ENCODE measurements at regions of chr3 and their contacts with region 1.

Region 1: DNA sequence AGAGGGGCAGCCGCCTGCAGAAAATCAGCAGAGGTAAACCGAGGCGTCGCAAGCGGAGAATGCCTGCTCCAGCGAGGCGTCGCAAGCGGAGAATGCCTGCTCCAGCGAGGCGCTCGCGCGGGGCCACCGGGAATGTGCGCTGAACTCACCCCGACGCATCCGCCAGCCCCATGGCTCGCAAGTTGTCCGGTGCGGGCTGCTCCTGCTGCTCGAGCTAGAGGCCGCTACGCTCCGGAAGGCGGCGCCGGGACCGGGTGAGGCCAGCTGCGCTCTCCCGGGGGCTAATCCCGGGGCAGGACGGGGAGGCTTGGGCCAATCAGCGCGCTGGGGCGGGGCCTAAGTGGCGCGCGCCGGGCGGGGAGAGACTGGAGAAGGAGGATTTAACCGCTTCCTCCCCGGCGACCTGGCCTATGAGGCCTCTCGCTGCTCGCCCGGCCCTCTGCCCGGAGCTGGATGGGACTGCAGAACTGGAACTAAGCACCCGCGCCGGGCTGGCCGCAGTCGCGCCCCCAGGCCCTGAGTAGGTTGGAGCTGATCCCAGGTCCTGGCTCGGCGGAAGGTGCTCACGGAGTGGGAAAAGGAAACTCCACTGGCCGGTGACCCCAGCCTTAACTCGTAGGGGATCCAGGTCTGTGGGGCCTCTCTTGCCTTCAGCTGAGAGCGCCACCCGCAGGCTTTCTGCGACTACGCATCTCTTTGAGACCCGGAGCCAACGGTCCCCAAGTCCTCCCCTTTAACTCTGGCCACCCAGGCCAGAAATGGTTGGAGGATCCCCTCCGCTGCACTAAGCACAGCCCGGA is at the start of gene SLC26A6:
- DNase-seq: peak; percentile 97
- H3K4me3 ChIP-seq: peak within 1 kb of the TSS; percentile 71 to 94 (median 82)
- H3K27ac ChIP-seq: peak within 1 kb of the TSS; percentile 33
- H3K4me1 ChIP-seq: peaks cover 14% of the 10 kb centered on the region
- H3K27me3 ChIP-seq: no peaks in the 10 kb centered on the region
- CTCF ChIP-seq: peak; percentile 40 to 67
- total RNA-seq, gene SLC26A6: 29.5 to 47.7 TPM

Region 2: GRCh38 chr3:48465531-48466378 is 169.7 kb before region 1 on chr3:
- CTCF ChIA-PET with region 1: no interaction called
- dilution Hi-C with region 1: loop called (anchors 5 kb)
- in situ Hi-C with region 1: no loop called
- intact Hi-C with region 1: loop called (anchors 10 kb)
- DNase-seq: peak; percentile 100
- H3K4me3 ChIP-seq: peak overlapping the region; percentile 26 to 55 (median 50)
- H3K27ac ChIP-seq: peak overlapping the region; percentile 99
- H3K4me1 ChIP-seq: peaks cover 33% of the 10 kb centered on the region
- H3K27me3 ChIP-seq: no peaks in the 10 kb centered on the region
- CTCF ChIP-seq: peak; percentile 45 to 81

Region 3: DNA sequence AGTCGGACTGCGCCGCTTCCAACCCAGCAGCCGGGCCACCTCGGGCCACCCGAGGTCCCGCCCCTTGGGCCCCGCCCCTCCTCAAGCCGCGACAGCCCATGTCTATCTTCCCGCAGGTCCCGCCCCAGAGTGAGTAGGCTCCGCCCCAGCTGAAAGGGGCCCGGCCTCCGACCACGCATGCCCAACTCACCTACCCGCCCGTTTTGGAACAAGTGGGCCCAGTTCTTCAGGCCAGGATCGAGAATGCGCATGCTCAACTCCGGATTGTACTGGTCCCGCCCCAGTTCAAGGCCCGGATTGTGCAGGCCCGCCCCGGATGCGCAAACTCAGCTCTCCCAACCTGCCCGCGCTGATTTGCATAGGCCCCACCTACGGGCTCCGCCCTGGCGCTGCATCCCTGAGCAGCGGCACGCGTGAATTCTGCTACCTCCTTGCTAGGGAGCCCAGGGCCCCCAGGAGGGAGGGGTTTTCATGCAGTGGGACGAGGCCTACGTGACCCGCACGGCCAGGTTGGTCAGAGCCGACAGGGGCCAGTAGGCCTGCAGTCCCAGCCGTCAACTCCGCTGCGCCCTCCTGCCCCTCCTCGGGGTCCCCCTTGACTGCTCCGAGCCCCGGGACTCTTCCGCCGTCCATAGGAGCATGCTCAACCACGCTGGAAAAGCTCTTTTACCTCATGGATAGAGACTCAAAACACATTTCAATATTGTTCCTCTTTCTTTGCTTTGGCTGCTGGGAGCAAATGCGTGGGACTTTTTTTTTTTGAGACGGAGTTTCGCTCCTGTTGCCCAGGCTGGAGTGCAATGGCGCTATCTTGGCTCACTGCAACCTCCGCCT is 78.4 kb before region 1 on chr3 and contains the start of gene PFKFB4:
- CTCF ChIA-PET with region 1: no interaction called
- dilution Hi-C with region 1: no loop called
- in situ Hi-C with region 1: no loop called
- intact Hi-C with region 1: loop called (anchors 1 kb)
- DNase-seq: peak; percentile 99
- H3K4me3 ChIP-seq: peak within 1 kb of the TSS; percentile 37 to 79 (median 64)
- H3K27ac ChIP-seq: peak within 1 kb of the TSS; percentile 47
- H3K4me1 ChIP-seq: peaks cover 47% of the 10 kb centered on the region
- H3K27me3 ChIP-seq: no peaks in the 10 kb centered on the region
- CTCF ChIP-seq: no peak
- total RNA-seq, gene PFKFB4: 14.7 to 45.3 TPM

Region 4: GRCh38 chr3:48595526-48596121 is 39.8 kb before region 1 on chr3:
- CTCF ChIA-PET with region 1: no interaction called
- dilution Hi-C with region 1: no loop called
- in situ Hi-C with region 1: no loop called
- intact Hi-C with region 1: loop called (anchors 1 kb)
- DNase-seq: peak; percentile 98
- H3K4me3 ChIP-seq: peak overlapping the region in 2 of 3 experiments; percentile 60 to 79
- H3K27ac ChIP-seq: peak overlapping the region; percentile 97
- H3K4me1 ChIP-seq: peaks cover 82% of the 10 kb centered on the region
- H3K27me3 ChIP-seq: no peaks in the 10 kb centered on the region
- CTCF ChIP-seq: no peak

Region 5: DNA sequence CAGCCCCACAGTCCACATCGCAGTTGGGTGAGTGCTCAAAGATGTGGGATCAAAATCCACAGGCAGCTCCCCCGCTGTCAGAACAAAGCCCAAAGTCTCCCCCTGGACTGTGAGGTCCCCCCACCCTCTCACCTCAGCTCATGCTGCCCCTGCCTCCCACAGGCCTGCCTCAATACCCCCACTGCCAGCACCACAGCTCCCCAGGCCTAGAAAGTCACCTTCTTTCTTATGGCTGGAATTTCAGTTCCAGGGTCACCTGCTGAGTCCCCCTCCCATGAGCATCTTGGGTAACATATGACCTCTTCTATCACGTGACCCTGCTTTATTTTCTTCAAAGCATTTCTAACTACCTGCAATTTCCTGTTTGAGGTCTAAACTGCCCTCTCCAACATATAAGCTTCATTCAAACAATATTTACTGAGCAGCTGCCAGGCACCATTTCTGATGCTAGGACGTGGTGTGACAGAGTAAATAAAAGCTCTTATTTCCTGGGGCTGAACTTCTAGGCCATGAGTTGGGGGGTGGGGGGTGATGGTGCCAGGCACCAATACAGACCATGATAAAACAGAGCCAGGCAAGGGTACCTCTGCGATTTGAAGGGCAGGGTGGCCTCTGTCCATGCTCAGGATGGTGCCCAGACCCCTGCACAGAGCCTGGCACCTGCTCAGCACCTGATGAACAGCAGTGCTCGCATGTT is 11.4 kb before region 1 on chr3:
- CTCF ChIA-PET with region 1: no interaction called
- dilution Hi-C with region 1: no loop called
- in situ Hi-C with region 1: no loop called
- intact Hi-C with region 1: loop called (anchors 1 kb)
- DNase-seq: no peak
- H3K4me3 ChIP-seq: no peak overlapping the region
- H3K27ac ChIP-seq: no peak overlapping the region
- H3K4me1 ChIP-seq: no peaks in the 10 kb centered on the region
- H3K27me3 ChIP-seq: no peaks in the 10 kb centered on the region
- CTCF ChIP-seq: no peak

Region 6: GRCh38 chr3:48685602-48686511 is 50.4 kb after region 1 on chr3 and contains the start of gene NCKIPSD:
- CTCF ChIA-PET with region 1: no interaction called
- dilution Hi-C with region 1: no loop called
- in situ Hi-C with region 1: no loop called
- intact Hi-C with region 1: loop called (anchors 1 kb)
- DNase-seq: peak; percentile 79
- H3K4me3 ChIP-seq: peak within 1 kb of the TSS; percentile 51 to 91 (median 79)
- H3K27ac ChIP-seq: peak within 1 kb of the TSS; percentile 69
- H3K4me1 ChIP-seq: peaks cover 32% of the 10 kb centered on the region
- H3K27me3 ChIP-seq: no peaks in the 10 kb centered on the region
- CTCF ChIP-seq: peak; percentile 45 to 87
- total RNA-seq, gene NCKIPSD: 14.8 to 21.1 TPM